ENCODE measurements at regions of chr22 and their contacts with region 1.

Region 1: GRCh38 chr22:24894220-24894975 is 52.1 kb downstream of the LHFPL7 start:
- DNase-seq: peak; percentile 78 to 96
- H3K4me3 ChIP-seq: peak overlapping the region; percentile 17 to 45
- H3K27ac ChIP-seq: peak overlapping the region; percentile 82 to 84
- H3K4me1 ChIP-seq: peaks cover 0 to 13% of the 10 kb centered on the region in 2 donors
- H3K27me3 ChIP-seq: no peaks in the 10 kb centered on the region
- CTCF ChIP-seq: no peak

Region 2: DNA sequence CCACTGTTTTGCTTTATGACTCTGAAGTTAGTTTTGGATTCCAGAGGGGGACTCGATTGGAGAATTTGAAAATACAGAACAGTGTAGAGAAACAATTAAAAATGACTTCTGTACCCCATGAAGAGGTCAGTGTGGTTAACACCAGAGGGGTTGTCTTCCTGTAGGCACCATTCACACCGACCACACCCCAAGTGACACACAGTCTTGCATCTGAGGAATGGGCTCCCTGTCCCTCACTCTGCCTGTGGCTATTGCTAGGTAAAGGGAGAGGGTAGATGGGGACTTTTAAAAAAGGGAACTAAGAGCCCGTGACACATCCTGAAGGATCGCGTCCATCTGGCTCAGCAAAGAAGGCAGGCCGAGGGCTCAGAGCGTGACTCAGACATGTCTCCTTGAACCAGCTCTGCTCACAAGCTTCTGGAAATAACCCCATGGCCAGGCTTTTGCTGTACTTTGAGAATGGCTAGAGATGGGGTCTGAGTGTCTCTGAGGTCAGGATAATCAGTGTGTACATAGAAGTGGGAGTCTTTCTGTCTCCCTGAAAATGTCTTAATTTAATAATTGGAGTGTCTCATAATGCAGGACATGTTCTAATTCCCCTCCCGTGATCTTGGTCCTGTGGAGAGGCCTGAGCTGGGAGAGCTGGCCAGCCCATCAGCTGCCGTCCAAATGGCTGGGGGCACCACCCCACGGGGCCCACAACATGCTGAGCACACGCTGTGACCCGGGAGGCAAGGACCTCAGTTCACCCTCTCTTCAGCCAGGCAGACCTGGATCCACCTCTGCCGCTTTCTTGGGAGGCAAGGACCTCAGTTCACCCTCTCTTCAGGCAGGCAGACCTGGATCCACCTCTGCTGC is 49.1 kb before region 1 on chr22:
- intact Hi-C with region 1: no loop called
- DNase-seq: peak in 1 of 2 donors; percentile 77
- H3K4me3 ChIP-seq: no peak overlapping the region
- H3K27ac ChIP-seq: peak overlapping the region; percentile 24 to 60
- H3K4me1 ChIP-seq: peaks cover 0 to 5% of the 10 kb centered on the region in 2 donors
- H3K27me3 ChIP-seq: no peaks in the 10 kb centered on the region
- CTCF ChIP-seq: no peak

Region 3: GRCh38 chr22:25747245-25747944 is 853.0 kb after region 1 on chr22:
- intact Hi-C with region 1: loop called (anchors 10 kb)
- DNase-seq: peak; percentile 87 to 97
- H3K4me3 ChIP-seq: peak overlapping the region; percentile 9 to 16
- H3K27ac ChIP-seq: peak overlapping the region; percentile 85 to 86
- H3K4me1 ChIP-seq: peaks cover 5 to 27% of the 10 kb centered on the region in 2 donors
- H3K27me3 ChIP-seq: no peaks in the 10 kb centered on the region
- CTCF ChIP-seq: no peak

Measured in ascending aorta (tissue), 2 donors.